Stomach (tissue), 19 donors: ENCODE measurements at regions of chr4 and their contacts with region 1.

Region 1: GRCh38 chr4:81466841-81467671 is 4.7 kb downstream of the RASGEF1B start:
- DNase-seq: peak; percentile 75 to 92
- H3K4me3 ChIP-seq: no peak overlapping the region
- H3K27ac ChIP-seq: peak overlapping the region in 2 of 5 donors; percentile 79 to 82
- H3K4me1 ChIP-seq: peaks cover 8 to 85% (median 52%) of the 10 kb centered on the region in 4 donors
- H3K27me3 ChIP-seq: no peaks in the 10 kb centered on the region
- CTCF ChIP-seq: peak in 5 of 7 experiments; percentile 91 to 94 (median 92)
- EP300 ChIP-seq: no peak
- POLR2A ChIP-seq: no peak

Region 2: GRCh38 chr4:81113024-81113423 is 354.0 kb before region 1 on chr4:
- intact Hi-C with region 1: no loop called
- DNase-seq: no peak
- H3K4me3 ChIP-seq: no peak overlapping the region
- H3K27ac ChIP-seq: no peak overlapping the region
- H3K4me1 ChIP-seq: no peaks in the 10 kb centered on the region
- H3K27me3 ChIP-seq: no peaks in the 10 kb centered on the region
- CTCF ChIP-seq: no peak
- EP300 ChIP-seq: no peak
- POLR2A ChIP-seq: no peak

Region 3: DNA sequence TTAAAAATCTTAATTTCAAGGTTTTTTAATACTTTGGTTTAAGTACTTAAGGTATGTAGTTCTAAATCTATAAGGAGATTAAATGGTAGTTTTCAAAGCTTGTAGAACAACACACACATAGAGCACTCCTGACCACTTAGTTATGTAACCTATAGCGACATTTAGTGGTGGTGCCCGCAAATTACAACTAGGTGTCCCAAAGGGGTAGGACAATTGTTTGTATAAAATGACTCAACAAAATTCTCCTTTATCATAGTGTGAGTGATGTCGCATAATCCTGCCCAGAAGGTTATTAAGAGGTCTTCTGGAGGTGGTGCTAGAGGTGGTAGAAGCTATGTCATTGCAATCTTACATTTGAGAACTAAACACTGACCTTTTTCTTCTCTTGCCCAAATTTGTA is 377.7 kb after region 1 on chr4:
- intact Hi-C with region 1: loop called (anchors 5 kb)
- DNase-seq: peak; percentile 89 to 92
- H3K4me3 ChIP-seq: no peak overlapping the region
- H3K27ac ChIP-seq: peak overlapping the region in 2 of 5 donors; percentile 30 to 32
- H3K4me1 ChIP-seq: peaks cover 0 to 26% (median 0%) of the 10 kb centered on the region in 4 donors
- H3K27me3 ChIP-seq: no peaks in the 10 kb centered on the region
- CTCF ChIP-seq: peak in 5 of 7 experiments; percentile 72 to 84 (median 80)
- EP300 ChIP-seq: no peak
- POLR2A ChIP-seq: no peak